ENCODE measurements at regions of chr4 and their contacts with region 1.

Region 1: GRCh38 chr4:174222266-174222872 is 61.1 kb downstream of the FBXO8 start:
- DNase-seq: no peak

Region 2: GRCh38 chr4:174096999-174097398 is 125.4 kb before region 1 on chr4:
- intact Hi-C with region 1: no loop called
- DNase-seq: peak in 2 of 10 donors; percentile 60

Region 3: DNA sequence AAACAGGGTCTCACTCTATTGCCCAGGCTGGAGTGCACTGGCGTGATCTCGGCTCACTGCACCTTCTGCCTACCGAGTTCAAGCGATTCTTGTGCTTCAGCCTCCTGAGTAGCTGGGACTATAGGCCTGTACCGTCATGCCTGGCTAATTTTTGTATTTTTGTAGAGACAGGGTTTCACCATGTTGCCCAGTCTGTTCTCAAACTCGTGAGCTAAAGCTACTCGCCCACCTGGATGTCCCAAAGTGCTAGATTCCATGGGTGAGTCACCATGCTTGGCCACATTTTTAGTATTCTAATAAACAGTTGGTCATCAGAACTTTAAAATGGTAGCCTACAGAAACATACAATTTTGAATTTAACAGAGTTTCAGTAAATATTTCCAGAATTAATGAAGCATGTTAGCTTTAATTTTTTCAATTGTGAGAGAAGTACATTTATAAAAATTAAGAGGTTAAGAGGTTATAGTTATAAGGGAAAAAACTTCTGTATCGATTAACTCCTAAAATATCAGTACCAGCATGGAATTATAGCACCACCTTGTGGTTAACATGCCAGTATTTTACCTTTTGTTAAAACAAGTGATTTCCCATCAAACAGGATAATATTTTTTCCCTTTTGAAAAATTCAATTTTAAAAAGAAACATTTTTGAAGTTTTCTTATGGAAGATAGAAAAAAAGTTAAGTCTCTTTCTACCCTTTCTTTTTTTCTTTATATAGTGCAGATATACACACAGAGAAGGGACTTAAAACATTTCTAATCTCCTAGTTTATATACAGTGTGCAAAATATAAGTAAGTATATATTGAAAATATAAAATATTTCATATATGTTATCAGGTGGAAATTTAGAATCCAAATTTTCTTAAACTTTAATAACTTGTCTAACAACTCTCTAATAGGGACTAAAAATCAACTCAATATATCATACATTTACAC is 96.7 kb after region 1 on chr4:
- intact Hi-C with region 1: loop called (anchors 5 kb)
- DNase-seq: no peak

Region 4: DNA sequence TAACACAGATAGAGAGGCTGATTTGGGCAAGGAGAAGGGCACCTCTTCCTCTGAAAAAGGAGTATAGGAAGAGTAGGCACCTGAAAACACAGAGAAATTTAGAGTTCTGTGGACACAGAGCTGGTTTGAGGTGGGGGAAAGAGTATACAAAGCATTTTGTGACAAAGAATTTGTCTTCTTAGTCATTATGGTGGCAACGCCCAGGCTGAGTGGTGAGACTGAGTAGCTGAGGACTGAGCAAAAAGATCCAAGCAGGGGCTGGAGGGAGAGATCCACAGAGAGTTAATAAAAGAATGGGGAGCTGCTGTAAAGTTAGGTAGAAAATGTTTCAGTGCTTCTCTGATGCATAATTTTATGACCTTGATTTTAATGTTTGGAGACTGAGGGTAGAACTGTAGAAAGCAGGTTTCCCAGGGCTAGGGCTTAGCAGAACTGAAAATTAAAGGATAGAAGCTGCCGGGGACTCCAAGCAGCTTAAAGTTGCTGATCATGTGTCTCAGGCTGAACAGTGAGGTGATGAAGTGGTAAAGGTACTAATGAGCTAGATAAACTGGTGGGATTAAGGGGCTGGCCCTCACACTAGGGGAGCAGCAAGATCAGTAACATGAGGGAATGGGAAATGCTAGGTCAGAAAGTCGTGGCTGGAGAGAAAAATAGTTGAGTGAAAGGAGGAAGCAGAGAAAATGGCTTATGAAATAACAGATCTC is 180.3 kb after region 1 on chr4:
- intact Hi-C with region 1: no loop called
- DNase-seq: no peak